HepG2 (cell line): ENCODE measurements at regions of chr1 and their contacts with region 1.

Region 1: DNA sequence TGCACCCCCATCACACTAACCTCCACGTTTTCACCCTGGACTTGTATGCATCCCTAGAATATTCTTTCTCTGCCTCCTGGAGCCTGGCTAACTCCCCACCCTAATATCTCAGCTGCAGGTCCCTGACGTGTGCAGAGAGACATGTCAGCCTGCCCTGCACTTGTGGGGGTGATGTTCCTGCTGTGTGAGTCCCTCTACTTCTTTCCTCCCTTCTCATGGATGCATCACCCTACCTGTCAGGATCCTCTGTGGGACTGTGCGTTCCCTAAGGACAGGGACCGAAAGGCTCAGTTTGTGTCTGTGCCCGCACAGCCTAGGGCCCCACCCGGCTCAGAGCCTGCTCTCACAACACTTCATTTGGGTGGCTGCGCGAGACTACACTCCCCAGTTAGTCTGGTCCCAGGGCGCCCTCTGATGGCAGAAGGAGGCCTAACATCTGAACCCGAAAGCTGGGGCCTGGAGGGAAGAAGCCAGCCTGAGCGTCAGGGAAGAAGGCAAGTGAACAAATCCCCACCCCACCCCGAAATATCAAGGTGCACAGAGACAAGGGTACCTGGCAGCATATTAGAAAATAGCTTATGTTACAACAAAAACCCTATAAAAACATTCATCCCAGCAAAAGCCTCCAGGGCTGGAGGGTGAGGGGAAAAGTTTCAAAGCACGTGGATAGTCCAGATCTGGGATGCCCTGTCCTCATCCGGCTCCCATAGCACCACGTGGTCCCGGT is 3.7 kb downstream of the CD52 start:
- DNase-seq: peak; percentile 69
- ATAC-seq: peak; percentile 92
- H3K4me3 ChIP-seq: no peak overlapping the region; a peak in 1 of 6 replicates
- H3K27ac ChIP-seq: no peak overlapping the region
- H3K4me1 ChIP-seq: no peaks in the 10 kb centered on the region
- H3K27me3 ChIP-seq: no peaks in the 10 kb centered on the region
- CTCF ChIP-seq: peak; percentile 96
- EP300 ChIP-seq: no peak
- POLR2A ChIP-seq: no peak
- RAD21 ChIP-seq: peak; percentile 94

Region 2: DNA sequence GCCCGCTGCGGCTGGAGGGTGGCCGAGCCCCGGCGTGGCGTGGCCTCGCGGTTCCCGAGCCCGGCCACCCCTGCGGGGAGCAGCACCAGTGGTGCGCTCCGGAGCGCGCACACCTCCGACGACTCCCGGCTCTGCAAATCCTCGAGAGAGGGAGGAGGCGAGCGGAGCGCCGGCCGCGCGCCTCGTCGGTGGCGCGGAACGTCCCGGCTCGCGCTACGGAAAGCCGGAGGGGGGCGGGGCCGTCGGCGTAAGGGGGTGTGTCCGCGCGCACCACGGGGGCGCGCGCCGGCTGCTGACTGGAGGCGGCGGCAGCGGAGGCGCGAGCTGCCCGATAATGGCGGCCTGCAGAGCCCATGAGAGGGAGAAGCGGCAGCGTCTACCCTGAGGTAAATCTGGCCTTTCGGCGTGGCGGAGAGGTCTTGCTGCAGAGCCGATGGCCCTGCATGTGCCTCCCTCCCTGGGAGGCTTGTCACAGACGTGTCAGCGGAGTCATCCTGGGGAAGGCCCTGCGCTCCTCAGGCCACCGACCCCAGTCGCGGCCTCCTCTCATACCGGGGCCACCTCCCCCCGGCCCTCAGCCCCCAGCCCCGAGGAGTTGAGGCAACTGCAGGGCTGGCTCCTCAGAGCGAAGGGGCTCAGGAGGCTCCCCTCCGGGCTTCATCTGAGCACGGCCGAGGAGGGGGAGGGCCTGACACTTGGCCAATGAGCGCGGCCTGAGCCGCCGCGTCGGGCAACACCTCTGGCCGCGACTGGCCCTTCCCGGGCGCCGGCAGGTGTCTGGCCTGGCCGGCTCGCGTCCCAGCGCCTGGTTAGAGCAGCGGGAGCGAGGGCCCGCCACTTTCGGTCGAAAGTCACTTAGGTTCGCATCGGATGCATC is 209.7 kb before region 1 on chr1 and contains the start of gene PDIK1L:
- CTCF ChIA-PET with region 1: no interaction called
- POLR2A ChIA-PET with region 1: no interaction called
- in situ Hi-C with region 1: no loop called
- intact Hi-C with region 1: no loop called
- DNase-seq: peak; percentile 84
- ATAC-seq: peak; percentile 93
- H3K4me3 ChIP-seq: peak within 1 kb of the TSS; percentile 73 to 98 (median 87)
- H3K27ac ChIP-seq: peak within 1 kb of the TSS; percentile 93
- H3K4me1 ChIP-seq: peaks cover 32% of the 10 kb centered on the region
- H3K27me3 ChIP-seq: no peaks in the 10 kb centered on the region; a peak in 1 of 5 replicates
- CTCF ChIP-seq: no peak
- EP300 ChIP-seq: no peak
- POLR2A ChIP-seq: peak; percentile 76
- RAD21 ChIP-seq: no peak; the same call in 1 of the 2 replicates
- total RNA-seq, gene PDIK1L: 4.6 and 5.8 TPM in 2 replicates

Region 3: DNA sequence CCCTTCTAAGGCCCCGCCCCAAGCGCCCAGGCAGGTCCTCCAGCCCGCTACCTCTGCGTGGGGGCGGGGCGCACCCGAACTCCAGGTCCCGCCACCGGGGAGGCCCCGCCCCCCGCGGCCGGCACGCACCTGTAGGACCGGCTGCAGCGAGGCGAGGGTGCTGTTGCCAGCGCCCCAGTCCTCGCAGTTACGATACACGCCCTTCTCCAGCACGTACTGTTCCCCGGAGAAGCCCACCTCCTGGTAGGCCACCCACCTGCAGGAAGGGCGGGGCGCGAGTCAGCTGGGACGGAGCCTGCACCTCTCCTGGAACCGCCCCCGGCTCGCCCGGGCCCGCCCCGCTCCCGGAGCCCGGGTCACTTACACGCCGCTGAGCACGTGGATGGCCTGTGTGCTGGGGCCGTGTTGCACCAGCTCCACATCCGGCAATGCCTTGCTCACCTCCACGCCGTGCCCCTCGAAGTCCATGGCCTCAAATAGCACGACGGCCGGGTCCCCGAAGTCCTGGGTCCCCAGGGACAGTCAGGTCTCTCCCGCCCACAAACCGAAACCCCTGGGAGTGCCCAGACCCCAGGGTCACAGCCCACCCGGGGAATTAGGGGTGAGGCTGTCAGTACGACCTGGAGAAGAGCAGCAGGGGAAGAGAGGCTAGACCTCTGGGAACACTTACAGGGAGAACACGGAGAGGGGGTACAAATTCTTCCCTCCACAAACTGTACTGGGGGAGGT is 15.2 kb after region 1 on chr1:
- CTCF ChIA-PET with region 1: no interaction called
- POLR2A ChIA-PET with region 1: no interaction called
- in situ Hi-C with region 1: no loop called
- intact Hi-C with region 1: no loop called
- DNase-seq: no peak
- ATAC-seq: peak; percentile 27; the same call in 1 of the 3 replicates
- H3K4me3 ChIP-seq: no peak overlapping the region
- H3K27ac ChIP-seq: no peak overlapping the region
- H3K4me1 ChIP-seq: peaks cover 23% of the 10 kb centered on the region
- H3K27me3 ChIP-seq: no peaks in the 10 kb centered on the region
- CTCF ChIP-seq: no peak
- EP300 ChIP-seq: no peak
- POLR2A ChIP-seq: no peak
- RAD21 ChIP-seq: no peak

Region 4: GRCh38 chr1:26363549-26364448 is 42.3 kb after region 1 on chr1:
- CTCF ChIA-PET with region 1: interaction called, 26 read pairs
- POLR2A ChIA-PET with region 1: interaction called, 5 read pairs
- in situ Hi-C with region 1: loop called (anchors 5 kb)
- intact Hi-C with region 1: loop called (anchors 2 kb)
- DNase-seq: peak; percentile 71
- ATAC-seq: peak; percentile 77
- H3K4me3 ChIP-seq: 0 out of 6 replicates have a peak overlapping the region, but pooled peaks of 1 of the 3 experiments have one; percentile 18
- H3K27ac ChIP-seq: no peak overlapping the region
- H3K4me1 ChIP-seq: peaks cover 57% of the 10 kb centered on the region
- H3K27me3 ChIP-seq: peaks cover 0 to 1% of the 10 kb centered on the region in 2 experiments; a peak in 2 of 5 replicates
- CTCF ChIP-seq: peak; percentile 95
- EP300 ChIP-seq: no peak
- POLR2A ChIP-seq: no peak
- RAD21 ChIP-seq: peak; percentile 96

Region 5: DNA sequence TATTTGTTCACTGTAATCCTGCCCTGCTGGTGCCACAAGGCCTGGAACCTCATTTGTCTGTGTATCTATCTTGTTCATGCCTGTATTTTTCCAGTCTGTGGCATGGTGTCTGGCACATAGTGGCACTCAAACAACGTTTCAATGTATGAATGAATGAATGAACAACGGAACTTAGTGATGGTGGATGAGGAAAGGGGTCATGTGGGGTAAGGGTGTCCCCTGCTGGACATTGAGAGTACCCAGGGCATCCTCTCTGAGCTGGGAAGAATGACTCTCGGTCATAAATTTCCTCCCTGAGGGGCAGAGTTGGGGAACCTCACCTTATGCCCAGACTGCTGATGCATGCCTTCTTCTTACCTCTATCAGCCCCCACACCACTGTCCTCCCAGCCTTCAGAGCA is 70.0 kb after region 1 on chr1:
- CTCF ChIA-PET with region 1: no interaction called
- POLR2A ChIA-PET with region 1: no interaction called
- in situ Hi-C with region 1: no loop called
- intact Hi-C with region 1: loop called (anchors 1 kb)
- DNase-seq: peak; percentile 52
- ATAC-seq: peak; percentile 67
- H3K4me3 ChIP-seq: no peak overlapping the region
- H3K27ac ChIP-seq: no peak overlapping the region
- H3K4me1 ChIP-seq: peaks cover 55% of the 10 kb centered on the region
- H3K27me3 ChIP-seq: no peaks in the 10 kb centered on the region; a peak in 2 of 5 replicates
- CTCF ChIP-seq: peak; percentile 81
- EP300 ChIP-seq: no peak
- POLR2A ChIP-seq: no peak
- RAD21 ChIP-seq: peak; percentile 87